Mammary epithelial cell (primary cell): ENCODE measurements at regions of chr9 and their contacts with region 1.

Region 1: GRCh38 chr9:114718801-114719221 is 36.8 kb upstream of the TEX48 start:
- DNase-seq: peak; percentile 97
- H3K4me3 ChIP-seq: no peak overlapping the region
- H3K27ac ChIP-seq: peak overlapping the region; percentile 53
- H3K4me1 ChIP-seq: peaks cover 46% of the 10 kb centered on the region
- H3K27me3 ChIP-seq: no peaks in the 10 kb centered on the region
- CTCF ChIP-seq: peak in 1 of 2 donors; percentile 38

Region 2: GRCh38 chr9:114732842-114733241 is 14.0 kb after region 1 on chr9:
- CTCF ChIA-PET with region 1: no interaction called
- dilution Hi-C with region 1: no loop called
- in situ Hi-C with region 1: no loop called
- intact Hi-C with region 1: loop called (anchors 1 kb)
- DNase-seq: peak; percentile 94
- H3K4me3 ChIP-seq: peak overlapping the region in 1 of 3 experiments; percentile 32
- H3K27ac ChIP-seq: peak overlapping the region; percentile 100
- H3K4me1 ChIP-seq: peaks cover 29% of the 10 kb centered on the region
- H3K27me3 ChIP-seq: no peaks in the 10 kb centered on the region
- CTCF ChIP-seq: no peak